Transverse colon (tissue), 4 donors: ENCODE measurements at regions of chr2 and their contacts with region 1.

Region 1: DNA sequence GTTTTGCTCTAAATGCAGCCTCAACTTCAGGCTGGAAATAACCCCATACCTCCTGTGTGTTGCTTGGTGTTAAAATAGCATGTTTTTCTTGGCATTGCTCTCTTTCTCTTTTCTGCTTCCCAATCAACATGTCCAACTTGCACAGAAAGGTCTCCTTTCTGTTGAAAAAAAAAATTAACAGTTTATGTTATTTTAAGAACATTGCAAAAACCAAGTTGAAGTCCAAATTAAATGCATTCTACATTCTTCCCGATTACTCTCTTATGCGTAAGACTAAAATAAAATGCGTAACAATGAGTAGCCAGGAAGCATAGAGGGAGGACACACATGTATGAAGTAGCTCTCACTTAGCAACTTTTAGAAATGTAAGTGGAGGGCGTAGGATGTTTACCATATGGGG is 1406.1 kb upstream of the NXPH2 start:
- DNase-seq: no peak
- H3K4me3 ChIP-seq: no peak overlapping the region
- H3K27ac ChIP-seq: no peak overlapping the region
- H3K4me1 ChIP-seq: no peaks in the 10 kb centered on the region
- H3K27me3 ChIP-seq: no peaks in the 10 kb centered on the region
- CTCF ChIP-seq: no peak
- EP300 ChIP-seq: no peak
- POLR2A ChIP-seq: no peak

Region 2: DNA sequence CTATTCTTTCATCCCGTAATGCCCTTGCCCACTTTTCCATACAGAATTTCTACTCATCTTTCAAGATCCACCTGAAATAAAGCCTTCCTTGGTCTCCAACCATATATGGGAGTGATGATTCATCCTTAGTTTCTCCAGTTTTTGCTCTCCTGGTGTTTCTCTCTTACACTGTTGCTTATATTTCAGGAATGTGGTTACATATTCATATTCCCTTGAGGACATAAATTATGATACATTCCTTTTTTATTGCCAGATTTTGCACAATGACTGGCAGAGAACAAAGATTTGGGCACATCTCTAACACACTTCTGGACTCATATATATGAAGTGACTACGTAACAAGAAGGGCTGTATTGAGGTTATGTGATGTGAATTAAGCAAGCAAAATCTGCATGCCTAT is 167.2 kb after region 1 on chr2:
- in situ Hi-C with region 1: no loop called
- intact Hi-C with region 1: no loop called
- DNase-seq: no peak
- H3K4me3 ChIP-seq: no peak overlapping the region
- H3K27ac ChIP-seq: no peak overlapping the region
- H3K4me1 ChIP-seq: no peaks in the 10 kb centered on the region
- H3K27me3 ChIP-seq: no peaks in the 10 kb centered on the region
- CTCF ChIP-seq: no peak
- EP300 ChIP-seq: no peak
- POLR2A ChIP-seq: no peak

Region 3: DNA sequence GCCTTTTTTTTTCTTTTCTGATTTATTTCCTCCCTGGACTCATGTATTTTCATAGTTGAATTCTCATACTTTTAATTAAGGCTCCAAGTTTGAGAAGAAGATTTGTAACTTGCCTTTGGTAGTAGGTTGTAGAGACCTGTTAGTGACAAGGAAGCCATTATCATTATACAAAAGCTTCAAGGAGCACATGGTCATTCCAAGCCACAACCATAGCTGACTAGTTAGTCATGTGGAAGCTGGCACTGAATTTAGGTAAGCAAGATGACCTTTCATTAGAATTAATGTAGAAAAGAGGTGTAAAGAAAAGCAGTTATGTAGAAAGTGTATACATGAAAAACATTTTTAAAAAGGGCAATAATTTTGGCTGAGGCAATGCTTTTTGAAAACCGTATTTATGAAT is 1854.8 kb after region 1 on chr2:
- in situ Hi-C with region 1: no loop called
- intact Hi-C with region 1: loop called (anchors 10 kb)
- DNase-seq: no peak
- H3K4me3 ChIP-seq: no peak overlapping the region
- H3K27ac ChIP-seq: no peak overlapping the region
- H3K4me1 ChIP-seq: no peaks in the 10 kb centered on the region
- H3K27me3 ChIP-seq: no peaks in the 10 kb centered on the region
- CTCF ChIP-seq: no peak
- EP300 ChIP-seq: no peak
- POLR2A ChIP-seq: no peak